ENCODE measurements at regions of chr11 and their contacts with region 1.

Region 1: GRCh38 chr11:75031771-75032549 is 43.2 kb downstream of the NEU3 start:
- DNase-seq: peak; percentile 55 to 95 (median 80)
- ATAC-seq: peak; percentile 72 to 95 (median 92)
- H3K4me3 ChIP-seq: no peak overlapping the region
- H3K27ac ChIP-seq: no peak overlapping the region
- H3K4me1 ChIP-seq: no peaks in the 10 kb centered on the region
- H3K27me3 ChIP-seq: no peaks in the 10 kb centered on the region
- CTCF ChIP-seq: peak; percentile 53 to 72 (median 64)

Region 2: DNA sequence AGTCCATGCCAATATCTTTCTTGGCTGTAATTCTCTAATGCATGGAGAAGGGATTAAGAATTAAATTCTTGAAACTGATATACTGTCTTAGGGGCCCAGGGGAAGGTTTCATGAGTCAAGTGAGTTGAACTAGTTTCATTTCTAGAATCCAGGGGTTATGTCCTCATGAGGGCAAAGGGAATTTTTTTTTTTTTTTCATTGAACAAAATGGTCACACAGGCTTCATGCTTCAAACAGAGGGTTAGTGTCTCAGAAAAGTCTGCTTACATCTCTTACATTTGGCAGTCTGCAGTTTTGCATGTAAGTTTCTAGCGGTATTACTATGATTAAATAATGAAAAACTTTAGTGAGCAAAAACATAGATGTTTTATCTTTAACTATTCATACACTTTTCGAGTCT is 828.0 kb before region 1 on chr11:
- intact Hi-C with region 1: no loop called
- DNase-seq: no peak
- ATAC-seq: no peak
- H3K4me3 ChIP-seq: no peak overlapping the region
- H3K27ac ChIP-seq: no peak overlapping the region
- H3K4me1 ChIP-seq: no peaks in the 10 kb centered on the region
- H3K27me3 ChIP-seq: no peaks in the 10 kb centered on the region
- CTCF ChIP-seq: no peak

Region 3: DNA sequence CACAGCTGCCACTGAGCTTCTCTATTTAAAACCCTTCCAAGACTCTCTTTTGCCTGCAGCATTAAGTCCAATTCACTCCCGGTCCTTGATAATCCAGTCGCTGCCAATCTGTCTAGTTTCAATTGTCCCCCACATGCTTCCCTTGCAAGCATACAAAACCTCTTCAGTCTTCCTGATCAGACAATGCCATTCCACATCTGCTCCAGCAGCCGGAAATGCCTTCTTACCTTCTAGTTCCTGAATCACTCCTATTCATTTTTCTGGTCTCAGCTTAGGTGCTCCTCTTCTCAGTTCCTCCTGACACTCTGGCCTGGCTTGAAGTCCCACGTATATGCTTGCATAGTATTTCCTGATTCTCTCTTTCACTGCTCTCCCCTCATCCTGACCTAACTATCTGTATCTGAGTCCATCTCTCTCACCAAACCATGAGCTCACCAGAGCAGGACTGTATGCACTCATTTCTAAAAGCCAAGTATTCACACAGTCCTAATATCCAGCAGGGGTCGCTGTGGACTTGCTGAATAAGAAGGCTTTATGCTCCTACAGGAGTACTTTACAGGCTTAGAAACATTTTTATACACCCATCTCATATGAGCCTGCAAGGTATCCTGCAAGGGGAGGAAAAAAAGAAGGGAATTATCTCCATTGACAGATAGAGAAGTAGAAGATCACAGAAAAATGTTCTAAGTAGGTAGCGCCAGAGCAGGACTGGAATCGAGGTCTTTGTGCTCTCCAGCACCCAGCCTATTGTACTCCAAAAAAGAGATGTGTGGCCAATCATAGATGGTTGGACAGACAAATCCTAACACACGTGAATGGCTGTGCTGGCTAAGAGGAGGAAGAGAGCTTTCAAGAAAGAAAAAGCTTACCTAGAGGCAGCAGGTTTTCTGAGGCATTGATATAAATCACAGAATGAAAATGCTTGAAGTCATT is 102.3 kb before region 1 on chr11:
- intact Hi-C with region 1: loop called in 2 of 3 experiments (anchors 5 kb)
- DNase-seq: peak in 4 of 6 donors; percentile 33 to 69 (median 50)
- ATAC-seq: peak; percentile 87 to 95 (median 92)
- H3K4me3 ChIP-seq: no peak overlapping the region
- H3K27ac ChIP-seq: no peak overlapping the region
- H3K4me1 ChIP-seq: no peaks in the 10 kb centered on the region
- H3K27me3 ChIP-seq: no peaks in the 10 kb centered on the region
- CTCF ChIP-seq: peak; percentile 71 to 83 (median 78)

Region 4: DNA sequence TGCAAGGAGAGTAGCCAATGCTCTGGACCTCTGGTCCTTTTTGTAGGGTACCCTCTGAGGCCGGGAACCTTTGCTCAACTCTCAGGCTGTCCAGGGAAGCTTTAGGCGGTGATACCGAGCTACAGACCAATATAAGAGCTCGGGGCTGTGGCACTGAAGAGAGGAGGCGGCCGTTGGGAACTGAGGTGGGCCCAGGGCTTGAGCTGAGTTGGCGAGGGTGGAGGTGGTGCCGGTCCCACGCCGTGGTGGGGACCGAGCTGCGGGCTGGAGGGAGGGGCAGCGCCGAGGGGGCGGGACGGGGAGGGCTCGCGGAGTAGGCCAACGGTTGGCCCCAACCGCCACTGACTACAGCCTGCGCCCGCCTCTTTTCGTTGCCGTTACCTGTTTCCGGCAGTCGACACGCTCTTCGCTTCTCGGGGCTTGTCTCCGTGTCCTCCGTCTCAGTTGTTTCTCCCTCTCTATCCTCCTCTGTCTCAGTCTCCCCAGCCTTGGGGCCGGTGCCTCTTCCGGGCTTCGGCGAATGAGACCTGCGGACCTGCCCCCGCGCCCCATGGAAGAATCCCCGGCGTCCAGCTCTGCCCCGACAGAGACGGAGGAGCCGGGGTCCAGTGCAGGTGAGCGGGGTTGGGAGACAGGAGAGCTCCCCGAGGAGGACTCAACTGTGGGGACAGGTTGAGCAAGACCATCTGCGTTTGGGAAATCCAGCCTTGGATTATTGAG is 43.3 kb before region 1 on chr11 and contains the start of gene NEU3:
- intact Hi-C with region 1: no loop called
- DNase-seq: peak; percentile 77 to 91 (median 82)
- ATAC-seq: peak; percentile 92 to 97 (median 96)
- H3K4me3 ChIP-seq: peak within 1 kb of the TSS; percentile 60 to 67 (median 64)
- H3K27ac ChIP-seq: peak within 1 kb of the TSS; percentile 56 to 77 (median 64)
- H3K4me1 ChIP-seq: peaks cover 0 to 8% (median 5%) of the 10 kb centered on the region in 3 donors
- H3K27me3 ChIP-seq: no peaks in the 10 kb centered on the region
- CTCF ChIP-seq: no peak
- total RNA-seq, gene NEU3: 3.1 to 7.2 (median 4.0) TPM

Region 5: DNA sequence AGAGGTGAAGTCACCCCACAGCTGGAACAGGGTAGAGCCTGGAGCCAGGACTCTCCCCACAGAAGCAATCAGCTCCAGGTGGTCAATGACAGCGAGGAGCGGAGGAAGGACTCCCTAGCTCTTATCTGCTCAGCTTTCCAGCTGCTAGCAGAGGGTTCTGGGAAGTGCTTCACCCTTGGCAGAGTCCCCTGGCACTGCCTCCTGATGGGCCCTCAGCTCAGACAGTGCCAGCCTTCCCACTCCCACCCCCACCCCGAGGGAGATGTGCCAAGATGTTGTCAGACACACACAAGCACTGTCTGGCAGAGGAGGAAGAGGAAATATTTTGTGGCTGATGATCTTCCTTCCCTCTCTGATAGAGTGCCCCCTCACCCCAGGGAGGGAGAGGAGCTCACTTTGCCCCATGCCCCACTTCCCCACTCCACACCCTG is 163.2 kb after region 1 on chr11:
- intact Hi-C with region 1: no loop called
- DNase-seq: peak in 1 of 6 donors; percentile 64
- ATAC-seq: peak in 3 of 4 donors; percentile 60 to 76 (median 73)
- H3K4me3 ChIP-seq: no peak overlapping the region
- H3K27ac ChIP-seq: no peak overlapping the region
- H3K4me1 ChIP-seq: no peaks in the 10 kb centered on the region
- H3K27me3 ChIP-seq: no peaks in the 10 kb centered on the region
- CTCF ChIP-seq: no peak

Measured in pancreas (tissue), 10 donors.